ENCODE measurements at regions of chr3 and their contacts with region 1.

Region 1: GRCh38 chr3:149657926-149658733 is at the start of gene WWTR1:
- DNase-seq: peak in 1 of 9 donors; percentile 55
- ATAC-seq: peak; percentile 54
- H3K4me3 ChIP-seq: peak within 1 kb of the TSS; percentile 47
- H3K4me3 Mint-ChIP-seq: peak within 1 kb of the TSS; percentile 63 to 87 (median 80)
- H3K27ac ChIP-seq: no peak within 1 kb of the TSS
- H3K27ac Mint-ChIP-seq: peak within 1 kb of the TSS in 2 of 9 donors; percentile 12 to 14
- H3K4me1 ChIP-seq: peaks cover 0 to 4% of the 10 kb centered on the region in 2 donors
- H3K4me1 Mint-ChIP-seq: peaks cover 0 to 21% (median 10%) of the 10 kb centered on the region in 7 donors
- H3K27me3 ChIP-seq: no peaks in the 10 kb centered on the region
- H3K27me3 Mint-ChIP-seq: peaks cover 60 to 81% (median 69%) of the 10 kb centered on the region in 5 donors
- total RNA-seq, gene WWTR1: 0.19 to 0.56 (median 0.34) TPM

Region 2: DNA sequence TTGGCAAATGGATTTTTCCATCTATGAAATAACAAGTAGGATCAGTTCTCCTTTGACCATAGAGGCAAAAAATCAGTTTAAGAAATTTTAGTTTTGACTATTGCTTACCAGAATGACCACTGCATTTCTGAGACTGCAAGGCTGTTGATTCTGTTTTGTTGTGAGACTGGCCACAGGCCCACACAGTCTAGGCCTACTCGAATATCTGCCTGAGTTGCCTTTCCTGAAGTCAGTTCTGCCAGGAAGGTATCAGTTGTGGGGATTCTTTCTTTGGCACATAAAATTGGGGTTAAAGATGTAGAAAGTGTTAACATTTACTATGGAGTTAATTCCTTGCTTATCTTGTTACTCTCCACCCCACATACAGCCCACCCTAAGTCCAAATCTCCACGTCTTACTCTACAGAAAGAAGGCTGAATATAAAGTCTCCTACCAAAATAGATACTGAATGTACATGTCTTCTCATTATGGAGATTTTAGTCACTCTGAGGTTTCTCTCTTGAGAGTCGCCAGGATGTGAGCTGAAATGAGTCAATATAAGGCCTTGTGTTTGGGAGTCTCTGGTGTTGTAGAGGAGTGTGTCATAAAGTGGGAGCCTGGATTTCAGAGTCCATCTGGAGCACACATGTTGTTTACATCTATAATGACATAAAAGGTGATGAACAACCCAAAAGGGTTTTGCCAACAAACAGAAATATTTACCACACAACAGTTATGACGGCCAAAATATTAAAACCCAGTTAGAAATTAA is 44.7 kb after region 1 on chr3:
- CTCF ChIA-PET with region 1: interaction called, 3 read pairs
- POLR2A ChIA-PET with region 1: no interaction called
- intact Hi-C with region 1: loop called in 1 of 2 experiments (anchors 5 kb)
- DNase-seq: no peak
- ATAC-seq: no peak
- H3K4me3 ChIP-seq: no peak overlapping the region
- H3K4me3 Mint-ChIP-seq: no peak overlapping the region
- H3K27ac ChIP-seq: no peak overlapping the region
- H3K27ac Mint-ChIP-seq: peak overlapping the region in 1 of 9 donors; percentile 6
- H3K4me1 ChIP-seq: peaks cover 0 to 3% of the 10 kb centered on the region in 2 donors
- H3K4me1 Mint-ChIP-seq: peaks cover 0 to 22% (median 0%) of the 10 kb centered on the region in 7 donors
- H3K27me3 ChIP-seq: no peaks in the 10 kb centered on the region
- H3K27me3 Mint-ChIP-seq: peaks cover 0 to 2% (median 0%) of the 10 kb centered on the region in 5 donors